Mammary epithelial cell (primary cell): ENCODE measurements at regions of chr4 and their contacts with region 1.

Region 1: DNA sequence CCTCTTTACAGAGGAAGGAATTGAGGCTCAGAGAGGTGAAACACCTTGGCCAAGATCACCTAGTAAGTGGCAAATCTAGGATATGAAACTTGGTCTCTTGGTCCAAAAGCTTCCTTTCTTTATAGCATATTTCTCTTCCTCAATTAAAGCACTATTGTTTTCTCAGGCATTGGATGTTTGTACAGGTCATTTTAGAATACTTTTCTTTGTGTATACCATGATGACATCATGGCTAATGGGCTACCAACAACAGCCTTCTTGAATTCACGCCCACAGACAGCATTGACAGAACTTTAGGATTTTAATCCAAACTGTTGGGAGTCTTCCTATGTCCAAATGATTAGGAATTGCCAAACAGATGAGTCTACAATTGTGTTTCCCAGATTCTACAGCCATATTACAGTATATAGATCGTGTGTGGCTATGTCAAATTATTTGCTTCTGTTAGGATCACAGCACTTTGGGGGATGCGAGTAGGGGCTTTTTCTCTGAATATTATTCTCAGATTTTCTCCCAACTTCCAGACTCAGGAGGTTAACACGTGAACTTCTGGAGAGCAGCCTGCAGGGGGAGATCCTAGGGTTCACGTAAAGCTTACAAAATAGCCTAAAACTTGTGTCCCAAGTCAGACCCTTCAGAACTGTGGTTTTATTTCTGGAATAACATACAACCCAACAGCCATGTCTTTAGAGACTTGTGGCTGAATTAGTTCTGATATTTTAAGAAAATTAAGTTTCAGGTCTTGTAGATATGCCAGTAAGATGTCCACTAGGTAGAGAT is 191.8 kb downstream of the SHROOM3 start:
- DNase-seq: no peak
- H3K4me3 ChIP-seq: no peak overlapping the region
- H3K27ac ChIP-seq: no peak overlapping the region
- H3K4me1 ChIP-seq: peaks cover 38% of the 10 kb centered on the region
- H3K27me3 ChIP-seq: no peaks in the 10 kb centered on the region
- CTCF ChIP-seq: peak; percentile 21 to 33

Region 2: DNA sequence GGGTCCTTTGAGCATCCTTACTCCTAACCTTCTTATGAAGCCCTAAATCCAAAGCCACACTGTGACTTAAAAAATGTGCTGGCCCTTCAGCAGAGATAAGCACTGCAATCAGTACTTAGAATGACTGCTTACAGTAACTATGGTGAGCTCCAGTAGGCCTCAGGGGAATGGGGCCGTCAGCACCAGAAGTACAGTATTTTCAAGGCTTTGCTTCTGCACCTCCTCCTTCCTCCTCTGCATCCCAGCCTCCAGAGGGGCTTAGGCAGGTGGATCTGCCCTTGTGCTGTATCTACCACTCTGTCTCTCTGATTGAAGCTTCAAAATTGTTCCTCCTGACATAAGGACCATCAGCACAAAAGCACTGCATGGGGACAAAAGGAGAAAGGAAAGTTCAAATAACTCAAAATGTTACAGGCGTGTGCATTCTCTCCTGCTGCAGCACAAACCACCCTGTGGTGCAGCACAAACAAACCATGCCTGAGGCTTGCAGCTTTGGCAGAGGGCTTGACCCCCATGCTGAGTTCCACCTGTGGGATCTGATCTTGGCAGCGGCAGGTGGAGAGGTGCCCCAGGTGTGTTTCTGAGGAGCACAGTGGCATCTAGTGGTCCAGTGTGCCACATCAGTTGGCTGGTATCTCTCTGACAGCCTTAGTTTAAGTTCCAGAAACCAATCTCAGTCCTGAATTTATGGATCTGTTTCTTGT is 106.3 kb after region 1 on chr4:
- CTCF ChIA-PET with region 1: no interaction called
- dilution Hi-C with region 1: loop called (anchors 5 kb)
- in situ Hi-C with region 1: no loop called
- intact Hi-C with region 1: no loop called
- DNase-seq: peak; percentile 34
- H3K4me3 ChIP-seq: no peak overlapping the region
- H3K27ac ChIP-seq: no peak overlapping the region
- H3K4me1 ChIP-seq: peaks cover 4% of the 10 kb centered on the region
- H3K27me3 ChIP-seq: no peaks in the 10 kb centered on the region
- CTCF ChIP-seq: peak; percentile 29 to 50